Sciatic nerve (tissue), 2 donors: ENCODE measurements at regions of chr22 and their contacts with region 1.

Region 1: GRCh38 chr22:27880778-27881394 is 38.2 kb downstream of the PITPNB start:
- DNase-seq: no peak
- ATAC-seq: peak; percentile 90

Region 2: DNA sequence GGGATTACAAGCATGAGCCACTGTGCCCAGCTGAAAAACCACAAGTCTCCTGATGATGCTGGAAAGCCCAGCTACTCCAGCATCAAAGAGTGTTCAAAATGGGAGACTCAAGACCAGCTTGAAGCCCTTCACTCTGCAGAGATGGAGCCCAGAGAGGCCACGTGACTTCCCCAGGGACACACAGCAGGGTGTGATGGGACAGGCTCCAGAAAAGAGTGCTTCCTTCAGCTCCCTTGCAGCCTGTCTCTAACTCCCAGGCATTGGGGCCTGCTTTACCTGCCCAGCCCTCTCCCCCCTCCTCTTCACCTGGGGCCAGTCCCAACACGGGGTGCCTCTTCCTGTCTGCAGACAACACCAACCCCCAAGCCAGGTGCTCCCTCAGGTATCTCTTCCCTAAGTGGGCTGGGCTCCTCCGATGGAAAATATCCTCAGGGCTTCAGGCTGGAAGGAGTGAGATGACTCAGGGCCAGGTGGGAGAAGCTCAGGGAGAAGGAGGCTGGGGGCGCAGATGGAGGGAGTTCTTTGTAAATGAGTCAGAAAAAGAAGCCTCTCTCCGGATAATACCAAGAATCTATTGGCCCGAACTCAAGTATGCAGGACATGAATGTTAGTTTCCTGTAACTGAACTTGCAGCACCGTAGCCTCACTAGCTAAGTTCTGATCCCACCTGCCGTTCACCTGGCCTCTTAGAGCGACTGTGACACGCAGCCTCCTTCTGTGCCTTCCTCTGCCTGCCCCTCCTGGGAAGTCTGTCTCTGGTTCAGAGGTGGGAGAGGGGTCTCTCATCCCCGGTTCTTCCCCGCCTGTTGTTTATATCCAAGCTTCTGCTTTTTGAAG is 406.0 kb before region 1 on chr22:
- intact Hi-C with region 1: no loop called
- DNase-seq: no peak
- ATAC-seq: peak; percentile 26

Region 3: GRCh38 chr22:28002181-28002700 is 121.4 kb after region 1 on chr22:
- intact Hi-C with region 1: loop called (anchors 5 kb)
- DNase-seq: no peak
- ATAC-seq: no peak